T-cell (primary cell): ENCODE measurements at regions of chr12 and their contacts with region 1.

Region 1: DNA sequence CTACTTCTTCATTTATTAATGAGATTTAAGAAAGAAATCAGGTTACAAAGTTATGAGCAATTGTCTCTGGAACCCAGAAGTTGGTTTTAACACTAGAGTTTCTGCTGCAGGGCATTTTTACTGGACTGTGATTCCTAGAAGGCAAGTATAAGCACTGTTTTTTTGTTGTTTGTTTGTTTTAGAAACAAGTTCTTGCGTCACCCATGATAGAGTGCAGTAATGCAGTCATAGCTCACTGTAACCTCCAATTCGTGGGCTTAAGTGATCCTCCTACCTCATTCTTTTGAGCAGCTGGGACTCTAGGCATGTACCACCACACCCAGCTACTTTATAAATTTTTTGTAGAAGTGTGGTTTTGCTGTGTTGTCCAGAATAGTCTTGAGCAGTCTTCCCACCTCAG is 25.6 kb downstream of the RAP1B start:
- DNase-seq: no peak
- ATAC-seq: no peak
- H3K4me3 ChIP-seq: no peak overlapping the region
- H3K4me3 Mint-ChIP-seq: peak overlapping the region in 2 of 3 donors; percentile 4 to 51
- H3K27ac ChIP-seq: no peak overlapping the region
- H3K27ac Mint-ChIP-seq: peak overlapping the region in 1 of 2 donors; percentile 69
- H3K4me1 ChIP-seq: peaks cover 52 to 57% of the 10 kb centered on the region in 2 experiments
- H3K4me1 Mint-ChIP-seq: peaks cover 94 to 97% (median 96%) of the 10 kb centered on the region in 3 donors
- H3K27me3 ChIP-seq: no peaks in the 10 kb centered on the region
- H3K27me3 Mint-ChIP-seq: no peaks in the 10 kb centered on the region

Region 2: GRCh38 chr12:68416826-68417225 is 219.4 kb before region 1 on chr12:
- CTCF ChIA-PET with region 1: no interaction called
- POLR2A ChIA-PET with region 1: interaction called in 1 of 2 experiments, 12 read pairs
- DNase-seq: no peak
- ATAC-seq: no peak
- H3K4me3 ChIP-seq: no peak overlapping the region
- H3K4me3 Mint-ChIP-seq: no peak overlapping the region
- H3K27ac ChIP-seq: no peak overlapping the region
- H3K27ac Mint-ChIP-seq: no peak overlapping the region
- H3K4me1 ChIP-seq: peaks cover 0 to 21% of the 10 kb centered on the region in 2 experiments
- H3K4me1 Mint-ChIP-seq: peaks cover 11 to 31% (median 12%) of the 10 kb centered on the region in 3 donors
- H3K27me3 ChIP-seq: no peaks in the 10 kb centered on the region
- H3K27me3 Mint-ChIP-seq: no peaks in the 10 kb centered on the region

Region 3: DNA sequence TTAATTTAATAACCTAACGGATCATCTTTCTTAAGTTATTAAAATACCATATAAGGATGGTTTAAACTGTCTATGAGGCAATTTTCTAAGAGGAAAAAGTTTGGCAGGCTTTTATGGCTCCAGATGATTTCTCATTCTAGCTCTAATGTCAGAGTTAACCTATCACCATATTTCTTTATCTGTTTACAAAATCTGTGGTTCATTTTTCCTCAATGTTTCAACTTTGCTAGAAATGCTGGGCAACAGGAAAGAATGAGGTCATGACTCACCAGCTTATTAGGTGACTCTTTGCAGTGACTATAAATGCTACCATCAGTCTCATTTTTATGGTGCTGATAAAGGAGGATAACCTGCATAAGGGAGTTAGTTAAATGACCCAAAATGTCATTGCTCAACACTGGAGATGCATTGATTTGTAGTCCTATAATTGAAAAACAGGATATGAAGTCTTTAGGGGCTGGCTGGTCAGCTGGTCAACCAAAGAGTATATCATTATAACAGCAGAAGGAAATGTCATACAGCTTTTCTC is 70.8 kb before region 1 on chr12:
- CTCF ChIA-PET with region 1: no interaction called
- POLR2A ChIA-PET with region 1: interaction called in 1 of 2 experiments, 10 read pairs
- DNase-seq: peak in 1 of 35 experiments; percentile 19
- ATAC-seq: peak in 3 of 4 experiments; percentile 31 to 58 (median 55)
- H3K4me3 ChIP-seq: no peak overlapping the region
- H3K4me3 Mint-ChIP-seq: no peak overlapping the region
- H3K27ac ChIP-seq: no peak overlapping the region
- H3K27ac Mint-ChIP-seq: no peak overlapping the region
- H3K4me1 ChIP-seq: peaks cover 5 to 13% of the 10 kb centered on the region in 2 experiments
- H3K4me1 Mint-ChIP-seq: peaks cover 21 to 22% (median 22%) of the 10 kb centered on the region in 3 donors
- H3K27me3 ChIP-seq: no peaks in the 10 kb centered on the region
- H3K27me3 Mint-ChIP-seq: no peaks in the 10 kb centered on the region

Region 4: DNA sequence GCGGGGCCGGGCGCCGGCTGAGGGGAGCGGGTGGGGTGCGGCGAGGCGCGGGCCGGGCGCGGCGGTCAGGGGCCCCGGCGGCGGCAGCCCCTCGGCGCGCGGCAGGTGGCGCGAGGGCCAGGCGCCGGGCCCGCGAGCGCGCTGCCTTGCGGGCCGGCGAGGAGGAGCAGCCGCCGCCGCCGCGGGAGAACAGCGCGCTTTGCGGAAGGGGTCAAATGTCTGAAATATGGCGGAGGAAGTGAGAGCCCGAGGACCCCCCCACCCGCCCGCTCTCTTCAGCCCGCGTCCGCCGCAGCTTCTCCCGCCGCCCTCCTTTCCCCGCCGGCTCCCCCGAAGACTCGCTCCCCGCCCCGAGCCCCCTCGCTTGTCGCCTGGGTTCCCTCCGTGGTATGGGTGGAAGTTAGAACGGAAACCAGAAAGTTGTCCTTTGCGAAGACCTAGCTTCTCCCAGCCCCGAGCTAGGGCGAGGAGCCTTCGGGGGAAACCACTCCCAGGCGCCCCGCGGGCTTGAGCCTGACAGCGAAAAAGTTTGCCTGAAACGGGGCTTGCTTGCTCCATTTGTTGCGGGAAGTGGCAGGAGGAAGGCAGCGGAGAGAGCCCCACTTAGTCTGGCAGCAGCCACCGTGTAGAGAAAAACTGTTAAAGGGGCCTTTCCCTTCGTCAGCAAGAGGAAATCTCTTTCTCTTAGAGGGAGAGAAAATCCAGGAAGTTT is 25.0 kb before region 1 on chr12:
- CTCF ChIA-PET with region 1: interaction called in 1 of 2 experiments, 3 read pairs
- POLR2A ChIA-PET with region 1: interaction called, 7 to 14 read pairs
- DNase-seq: peak in 34 of 35 experiments; percentile 18 to 66 (median 34)
- ATAC-seq: peak; percentile 15 to 50 (median 42)
- H3K4me3 ChIP-seq: peak overlapping the region; percentile 97 to 99
- H3K4me3 Mint-ChIP-seq: peak overlapping the region; percentile 94 to 100 (median 96)
- H3K27ac ChIP-seq: peak overlapping the region; percentile 92
- H3K27ac Mint-ChIP-seq: peak overlapping the region; percentile 95 to 97
- H3K4me1 ChIP-seq: peaks cover 19 to 27% of the 10 kb centered on the region in 2 experiments
- H3K4me1 Mint-ChIP-seq: peaks cover 43 to 58% (median 49%) of the 10 kb centered on the region in 3 donors
- H3K27me3 ChIP-seq: no peaks in the 10 kb centered on the region
- H3K27me3 Mint-ChIP-seq: no peaks in the 10 kb centered on the region

Region 5: GRCh38 chr12:68617160-68617926 is 18.9 kb before region 1 on chr12:
- CTCF ChIA-PET with region 1: interaction called in 1 of 2 experiments, 3 read pairs
- POLR2A ChIA-PET with region 1: interaction called, 3 to 14 read pairs
- DNase-seq: no peak
- ATAC-seq: no peak
- H3K4me3 ChIP-seq: peak overlapping the region in 1 of 2 donors; percentile 32
- H3K4me3 Mint-ChIP-seq: peak overlapping the region; percentile 14 to 100 (median 15)
- H3K27ac ChIP-seq: no peak overlapping the region
- H3K27ac Mint-ChIP-seq: peak overlapping the region; percentile 43 to 58
- H3K4me1 ChIP-seq: peaks cover 52 to 66% of the 10 kb centered on the region in 2 experiments
- H3K4me1 Mint-ChIP-seq: peaks cover 81 to 90% (median 84%) of the 10 kb centered on the region in 3 donors
- H3K27me3 ChIP-seq: no peaks in the 10 kb centered on the region
- H3K27me3 Mint-ChIP-seq: no peaks in the 10 kb centered on the region

Region 6: GRCh38 chr12:68667896-68668295 is 31.6 kb after region 1 on chr12:
- CTCF ChIA-PET with region 1: no interaction called
- POLR2A ChIA-PET with region 1: no interaction called
- DNase-seq: no peak
- ATAC-seq: peak in 2 of 4 experiments; percentile 23 to 29
- H3K4me3 ChIP-seq: no peak overlapping the region
- H3K4me3 Mint-ChIP-seq: no peak overlapping the region
- H3K27ac ChIP-seq: peak overlapping the region; percentile 13
- H3K27ac Mint-ChIP-seq: peak overlapping the region; percentile 2 to 45
- H3K4me1 ChIP-seq: peaks cover 4 to 16% of the 10 kb centered on the region in 2 experiments
- H3K4me1 Mint-ChIP-seq: peaks cover 44 to 47% (median 46%) of the 10 kb centered on the region in 3 donors
- H3K27me3 ChIP-seq: no peaks in the 10 kb centered on the region
- H3K27me3 Mint-ChIP-seq: no peaks in the 10 kb centered on the region

Region 7: GRCh38 chr12:69388371-69388770 is 752.1 kb after region 1 on chr12:
- CTCF ChIA-PET with region 1: no interaction called
- POLR2A ChIA-PET with region 1: interaction called in 1 of 2 experiments, 12 read pairs
- DNase-seq: peak in 1 of 35 experiments; percentile 31
- ATAC-seq: no peak
- H3K4me3 ChIP-seq: no peak overlapping the region
- H3K4me3 Mint-ChIP-seq: no peak overlapping the region
- H3K27ac ChIP-seq: no peak overlapping the region
- H3K27ac Mint-ChIP-seq: no peak overlapping the region
- H3K4me1 ChIP-seq: no peaks in the 10 kb centered on the region
- H3K4me1 Mint-ChIP-seq: peaks cover 0 to 5% (median 0%) of the 10 kb centered on the region in 3 donors
- H3K27me3 ChIP-seq: no peaks in the 10 kb centered on the region
- H3K27me3 Mint-ChIP-seq: no peaks in the 10 kb centered on the region